Right ventricle myocardium inferior (tissue), 1 donor: ENCODE measurements at regions of chr6 and their contacts with region 1.

Region 1: GRCh38 chr6:108541838-108542759 is 18.6 kb upstream of the FOXO3 start:
- DNase-seq: peak; percentile 83
- ATAC-seq: peak; percentile 77

Region 2: DNA sequence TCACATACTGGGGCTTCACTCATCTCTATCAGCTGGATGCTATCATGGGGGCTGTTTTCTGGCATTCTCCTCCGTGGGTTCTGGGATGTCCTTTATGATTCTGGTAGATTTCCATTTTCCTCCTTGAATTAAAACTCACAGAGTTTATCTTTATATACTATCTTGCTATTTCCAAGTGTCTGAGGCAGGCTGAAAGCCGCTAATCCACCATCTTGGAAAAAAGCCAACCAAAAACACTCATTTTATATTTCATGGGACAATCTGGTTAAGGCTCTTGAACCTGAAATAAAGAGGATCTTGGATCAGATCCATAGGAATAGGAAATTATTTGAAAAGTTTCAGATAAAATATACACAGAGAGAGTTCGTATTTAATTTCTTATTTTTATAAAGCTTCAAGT is 161.2 kb before region 1 on chr6:
- intact Hi-C with region 1: no loop called
- DNase-seq: no peak
- ATAC-seq: no peak

Region 3: DNA sequence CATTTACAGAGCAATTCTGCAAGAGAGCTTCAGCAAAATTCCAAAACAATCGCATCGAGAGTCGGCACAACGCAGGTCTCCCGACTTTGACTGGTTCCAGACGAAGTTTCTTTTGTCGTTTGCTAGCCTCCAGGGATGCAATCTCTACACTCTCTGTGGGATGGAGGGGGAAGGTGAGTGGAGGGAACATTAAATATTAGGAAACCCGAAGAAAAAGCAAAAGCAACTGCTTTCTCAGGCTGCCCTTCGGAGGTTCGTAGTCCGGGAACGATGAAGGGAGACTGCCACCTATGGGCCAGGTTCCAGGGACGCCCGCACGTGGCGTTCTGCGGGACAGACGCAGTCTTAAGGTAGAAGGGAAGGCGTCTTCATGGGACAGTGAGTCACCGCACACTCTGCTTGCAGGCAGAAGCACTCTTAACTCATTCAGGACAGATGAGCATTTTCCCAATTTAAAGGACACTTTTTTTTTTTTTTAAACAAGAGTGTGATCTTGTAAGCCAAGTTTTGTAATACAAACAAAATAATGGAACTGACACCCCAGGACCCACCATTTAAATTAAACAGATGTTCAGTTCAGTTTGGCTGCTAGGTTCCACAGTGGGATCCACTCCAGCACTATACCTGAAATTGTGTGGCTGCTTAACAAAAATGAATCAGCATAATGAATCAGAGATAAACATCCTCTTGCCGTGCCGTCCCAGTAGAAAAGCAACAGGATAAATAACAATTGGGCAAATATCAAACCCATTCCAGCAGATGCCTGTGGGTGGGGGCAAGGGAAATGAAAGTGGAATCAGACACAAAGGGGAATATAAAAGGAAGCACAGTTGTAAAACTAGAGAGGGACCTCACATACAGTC is 240.3 kb after region 1 on chr6:
- intact Hi-C with region 1: loop called (anchors 1 kb)
- DNase-seq: peak; percentile 92
- ATAC-seq: peak; percentile 91

Region 4: GRCh38 chr6:108835218-108835850 is 293.2 kb after region 1 on chr6:
- intact Hi-C with region 1: loop called (anchors 1 kb)
- DNase-seq: peak; percentile 93
- ATAC-seq: peak; percentile 93

Region 5: DNA sequence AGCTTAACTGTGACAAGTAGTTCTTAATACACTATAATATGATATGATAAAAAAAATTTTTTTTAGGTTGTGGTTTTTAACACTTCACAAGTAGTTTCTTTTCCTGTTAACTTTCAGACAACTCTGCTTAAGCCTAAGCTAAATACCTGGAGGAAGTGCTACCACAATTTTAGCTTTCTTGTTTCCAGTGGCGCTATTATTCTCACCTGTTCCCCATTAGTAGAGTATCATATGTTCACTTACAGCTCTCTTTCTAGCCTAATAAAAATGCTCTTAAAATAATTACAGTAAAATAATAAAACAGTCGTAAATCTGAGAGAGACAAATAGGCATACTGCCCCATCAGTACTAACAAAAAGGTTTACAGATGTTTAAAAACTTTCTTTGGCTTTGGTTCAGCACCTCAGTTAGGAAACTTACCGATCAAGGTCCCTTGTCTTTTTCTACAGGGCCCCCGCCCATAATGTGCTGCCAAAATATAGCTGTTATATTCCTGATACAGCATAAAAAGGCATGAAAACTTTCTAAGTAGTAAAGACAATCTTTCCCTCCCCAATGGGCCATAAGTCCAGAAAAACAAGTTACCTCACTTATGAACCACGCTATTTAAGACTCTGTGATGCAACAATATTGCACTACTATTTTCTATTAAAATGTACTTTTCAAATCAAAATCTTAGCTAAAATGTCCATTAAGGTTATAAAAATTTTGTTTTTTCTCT is 494.6 kb after region 1 on chr6:
- intact Hi-C with region 1: no loop called
- DNase-seq: no peak
- ATAC-seq: peak; percentile 30

Region 6: GRCh38 chr6:109174911-109175310 is 632.8 kb after region 1 on chr6:
- intact Hi-C with region 1: loop called (anchors 5 kb)
- DNase-seq: no peak
- ATAC-seq: no peak